ENCODE measurements at regions of chr7 and their contacts with region 1.

Region 1: DNA sequence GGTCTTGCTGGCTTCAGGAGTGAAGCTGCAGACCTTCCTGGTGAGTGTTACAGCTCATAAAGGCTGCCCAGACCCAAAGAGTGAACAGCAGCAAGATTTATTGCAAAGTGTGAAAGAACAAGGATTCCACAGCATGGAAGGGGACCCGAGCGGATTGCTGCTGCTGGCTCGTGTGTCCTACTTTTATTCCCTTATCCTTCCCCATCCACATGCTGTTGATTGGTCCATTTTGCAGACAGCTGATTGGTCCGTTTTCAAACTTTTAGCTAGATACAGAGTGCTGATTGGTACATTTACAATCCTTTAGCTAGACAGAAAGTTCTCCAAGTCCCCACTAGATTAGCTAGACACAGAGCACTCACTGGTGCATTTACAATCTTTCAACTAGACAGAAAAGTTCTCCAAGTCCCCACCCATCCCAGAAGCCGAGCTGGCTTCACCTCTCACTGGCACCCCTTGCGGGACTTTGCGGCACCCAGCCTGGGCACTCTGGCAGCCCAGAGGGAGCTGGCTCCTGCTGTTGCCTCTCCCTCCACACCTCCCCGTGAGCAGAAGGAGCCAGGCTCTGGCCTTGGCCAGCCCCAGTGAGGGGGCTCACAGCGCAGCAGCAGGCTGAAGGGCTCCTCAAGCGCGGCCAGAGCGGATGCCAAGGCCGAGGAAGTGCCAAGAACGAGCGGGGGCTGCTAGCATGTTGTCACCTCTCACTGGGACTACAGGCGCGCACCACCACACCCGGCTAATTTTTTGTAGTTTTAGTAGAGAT is 369.6 kb upstream of the POT1 start:
- DNase-seq: no peak
- H3K4me3 Mint-ChIP-seq: no peak overlapping the region
- H3K27ac Mint-ChIP-seq: no peak overlapping the region
- H3K4me1 Mint-ChIP-seq: no peaks in the 10 kb centered on the region
- H3K27me3 Mint-ChIP-seq: no peaks in the 10 kb centered on the region

Region 2: DNA sequence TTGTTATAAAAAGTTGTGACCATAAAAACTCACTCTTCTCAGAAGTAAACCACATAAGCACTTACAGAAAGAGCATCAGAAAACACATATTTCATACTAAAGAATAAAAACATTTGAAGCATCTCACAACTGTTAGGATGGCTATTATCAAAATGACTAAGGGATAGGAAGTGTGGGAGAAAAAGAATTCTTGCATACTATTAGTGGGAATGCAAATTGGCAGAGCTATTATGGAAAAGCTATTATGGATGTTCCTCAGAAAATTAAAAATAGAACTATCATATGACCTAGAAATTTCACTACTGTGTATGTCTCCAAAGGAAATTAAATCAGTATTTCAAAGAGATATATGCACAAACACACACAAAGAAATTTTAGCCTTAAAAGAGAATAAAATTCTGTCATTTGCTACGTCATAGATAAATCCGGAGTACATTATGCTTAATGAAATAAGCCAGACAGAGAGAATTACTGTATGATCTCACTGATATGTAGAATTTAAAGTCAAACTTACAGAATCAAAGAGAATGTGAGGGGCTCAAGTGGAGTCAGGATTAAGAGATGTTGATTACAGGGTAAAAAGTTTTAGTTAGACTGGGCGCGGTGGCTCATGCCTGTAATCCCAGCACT is 344.3 kb before region 1 on chr7:
- intact Hi-C with region 1: no loop called
- DNase-seq: no peak
- H3K4me3 Mint-ChIP-seq: no peak overlapping the region
- H3K27ac Mint-ChIP-seq: no peak overlapping the region
- H3K4me1 Mint-ChIP-seq: peaks cover 3% of the 10 kb centered on the region
- H3K27me3 Mint-ChIP-seq: no peaks in the 10 kb centered on the region

Region 3: GRCh38 chr7:125222596-125222995 is 76.6 kb before region 1 on chr7:
- intact Hi-C with region 1: no loop called
- DNase-seq: no peak
- H3K4me3 Mint-ChIP-seq: no peak overlapping the region
- H3K27ac Mint-ChIP-seq: no peak overlapping the region
- H3K4me1 Mint-ChIP-seq: no peaks in the 10 kb centered on the region
- H3K27me3 Mint-ChIP-seq: no peaks in the 10 kb centered on the region

Region 4: DNA sequence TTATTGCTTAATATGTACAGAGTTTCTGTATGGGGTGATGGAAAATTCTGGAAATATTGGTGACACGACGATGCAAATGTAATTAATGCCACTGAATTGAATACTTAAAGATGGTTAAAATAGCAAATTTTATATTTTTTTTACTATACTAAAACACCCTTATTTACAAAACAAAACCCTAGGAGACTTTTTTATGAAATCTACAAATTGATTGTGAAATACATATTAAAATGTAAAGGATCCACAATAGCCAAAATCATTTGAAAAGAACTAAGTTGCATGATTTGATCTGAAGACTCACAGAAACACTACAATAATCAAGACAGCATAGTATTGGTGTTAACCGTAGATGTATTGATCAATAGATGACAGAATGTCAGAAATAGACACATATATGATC is 1701.5 kb after region 1 on chr7:
- intact Hi-C with region 1: loop called (anchors 10 kb)
- DNase-seq: no peak
- H3K4me3 Mint-ChIP-seq: no peak overlapping the region
- H3K27ac Mint-ChIP-seq: no peak overlapping the region
- H3K4me1 Mint-ChIP-seq: no peaks in the 10 kb centered on the region
- H3K27me3 Mint-ChIP-seq: no peaks in the 10 kb centered on the region